ENCODE measurements at regions of chr14 and their contacts with region 1.

Region 1: GRCh38 chr14:64465191-64465822 is at the start of gene AKAP5:
- DNase-seq: peak; percentile 71
- ATAC-seq: peak; percentile 92
- H3K4me3 Mint-ChIP-seq: peak within 1 kb of the TSS; percentile 80
- H3K27ac Mint-ChIP-seq: peak within 1 kb of the TSS; percentile 71
- H3K4me1 Mint-ChIP-seq: peaks cover 40% of the 10 kb centered on the region
- H3K27me3 Mint-ChIP-seq: peaks cover 4% of the 10 kb centered on the region
- total RNA-seq, gene AKAP5: 1.9 to 2.1 TPM

Region 2: DNA sequence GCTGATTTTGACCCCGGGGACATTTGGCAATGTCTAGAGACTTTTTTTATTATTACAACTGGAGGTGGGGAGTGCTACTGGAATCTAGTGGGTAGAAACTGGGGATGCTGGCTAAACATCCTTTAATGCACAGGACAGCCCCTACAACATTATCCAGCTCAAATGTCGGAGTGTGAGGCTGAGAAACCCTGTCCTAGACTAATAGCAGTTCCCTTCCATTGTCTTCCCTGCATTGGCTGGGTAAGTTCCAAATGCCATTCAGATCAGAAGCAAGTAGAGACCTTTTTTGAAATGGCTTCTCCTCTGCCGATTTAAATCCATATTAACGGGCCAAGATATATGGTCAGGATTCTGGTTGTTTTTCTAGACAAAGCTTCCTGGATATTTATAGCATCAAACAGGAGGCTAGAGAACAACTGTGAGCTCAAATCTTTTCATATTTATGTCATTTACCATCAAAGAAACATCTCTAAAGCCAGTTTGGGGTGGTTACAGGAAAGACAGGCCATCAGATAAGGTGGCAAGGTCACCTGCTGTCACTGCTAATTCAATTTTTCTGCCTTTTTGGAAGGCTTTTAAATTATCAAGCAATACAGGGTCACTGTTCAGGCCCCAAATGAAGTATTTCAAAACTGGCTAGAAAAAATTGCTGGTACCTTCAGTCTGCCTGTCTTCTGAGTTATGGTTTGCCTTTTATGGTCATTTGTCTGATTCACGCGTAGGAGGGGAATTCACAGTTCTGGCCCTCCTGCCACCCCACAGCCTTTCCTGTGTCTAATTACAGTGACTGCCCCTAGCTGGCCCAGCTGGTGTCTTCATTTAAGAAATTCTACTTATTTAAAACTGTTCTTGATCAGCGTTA is 20.1 kb before region 1 on chr14:
- CTCF ChIA-PET with region 1: interaction called, 24 read pairs
- POLR2A ChIA-PET with region 1: interaction called, 4 read pairs
- DNase-seq: peak; percentile 63
- ATAC-seq: peak; percentile 75
- H3K4me3 Mint-ChIP-seq: no peak overlapping the region
- H3K27ac Mint-ChIP-seq: peak overlapping the region; percentile 91
- H3K4me1 Mint-ChIP-seq: peaks cover 54% of the 10 kb centered on the region
- H3K27me3 Mint-ChIP-seq: no peaks in the 10 kb centered on the region

Region 3: DNA sequence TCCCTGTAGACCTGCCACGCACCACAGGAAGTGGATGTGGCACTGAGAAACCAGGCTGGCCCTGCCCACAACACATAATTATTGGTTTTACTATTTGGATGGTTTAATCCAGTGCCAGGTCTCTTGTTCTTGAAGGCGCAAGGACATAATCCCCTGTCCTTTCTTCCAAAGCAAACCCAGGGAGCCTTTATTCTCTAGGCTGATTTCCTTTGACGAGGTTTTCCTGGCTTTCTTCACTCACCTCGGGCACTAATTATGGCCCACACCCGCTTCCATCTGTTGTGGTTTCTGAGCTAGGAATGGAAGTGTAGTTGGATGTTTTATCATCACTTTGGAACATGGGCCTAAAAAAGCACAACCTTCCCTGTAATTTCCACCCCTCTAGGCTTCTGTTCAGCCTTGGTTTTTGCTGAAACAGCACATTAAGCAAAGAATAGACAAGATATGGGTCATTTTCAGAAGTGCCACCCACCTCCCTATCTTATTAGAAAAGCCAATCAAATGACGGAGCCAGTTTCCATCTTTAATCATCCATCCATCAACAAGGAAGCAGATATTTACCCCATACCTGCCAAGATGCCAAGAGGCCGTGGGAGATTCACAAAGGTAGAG is 158.4 kb after region 1 on chr14:
- CTCF ChIA-PET with region 1: no interaction called
- POLR2A ChIA-PET with region 1: no interaction called
- DNase-seq: peak; percentile 26
- ATAC-seq: no peak
- H3K4me3 Mint-ChIP-seq: no peak overlapping the region
- H3K27ac Mint-ChIP-seq: no peak overlapping the region
- H3K4me1 Mint-ChIP-seq: peaks cover 14% of the 10 kb centered on the region
- H3K27me3 Mint-ChIP-seq: peaks cover 24% of the 10 kb centered on the region

Measured in activated CD8-positive, alpha-beta T cell treated with anti-CD3 and anti-CD28 coated beads, Interleukin-2, amount 10 ng/mL, durations not matched to agents 7 days and 5 days (primary cell).